Heart left ventricle (tissue), 16 donors: ENCODE measurements at regions of chr12 and their contacts with region 1.

Region 1: DNA sequence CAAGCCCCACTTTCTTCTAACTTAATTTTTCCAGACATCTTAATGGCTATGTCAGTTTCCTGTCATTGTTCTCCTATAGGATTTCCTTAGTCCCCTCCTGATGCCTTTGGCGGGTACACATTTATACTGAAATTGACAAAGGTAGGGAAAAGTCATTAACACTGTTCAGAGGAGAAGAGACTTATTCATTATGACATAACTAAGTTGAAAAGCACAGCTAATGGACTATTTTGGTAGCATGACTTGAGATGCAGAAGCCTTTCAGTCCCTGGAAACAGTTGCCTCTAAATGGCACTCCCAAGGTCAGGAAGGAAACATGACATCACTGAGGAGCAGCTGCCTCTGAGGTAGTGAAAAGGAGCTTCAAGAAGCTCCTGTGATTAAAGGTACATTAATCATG is 317.5 kb upstream of the KITLG start:
- DNase-seq: peak in 3 of 5 donors; percentile 37 to 39 (median 38)
- ATAC-seq: peak; percentile 64 to 97 (median 78)
- H3K4me3 ChIP-seq: no peak overlapping the region
- H3K27ac ChIP-seq: peak overlapping the region in 10 of 12 donors; percentile 15 to 77 (median 62)
- H3K4me1 ChIP-seq: peaks cover 0 to 17% (median 3%) of the 10 kb centered on the region in 12 donors
- H3K27me3 ChIP-seq: no peaks in the 10 kb centered on the region
- CTCF ChIP-seq: no peak
- POLR2A ChIP-seq: no peak

Region 2: DNA sequence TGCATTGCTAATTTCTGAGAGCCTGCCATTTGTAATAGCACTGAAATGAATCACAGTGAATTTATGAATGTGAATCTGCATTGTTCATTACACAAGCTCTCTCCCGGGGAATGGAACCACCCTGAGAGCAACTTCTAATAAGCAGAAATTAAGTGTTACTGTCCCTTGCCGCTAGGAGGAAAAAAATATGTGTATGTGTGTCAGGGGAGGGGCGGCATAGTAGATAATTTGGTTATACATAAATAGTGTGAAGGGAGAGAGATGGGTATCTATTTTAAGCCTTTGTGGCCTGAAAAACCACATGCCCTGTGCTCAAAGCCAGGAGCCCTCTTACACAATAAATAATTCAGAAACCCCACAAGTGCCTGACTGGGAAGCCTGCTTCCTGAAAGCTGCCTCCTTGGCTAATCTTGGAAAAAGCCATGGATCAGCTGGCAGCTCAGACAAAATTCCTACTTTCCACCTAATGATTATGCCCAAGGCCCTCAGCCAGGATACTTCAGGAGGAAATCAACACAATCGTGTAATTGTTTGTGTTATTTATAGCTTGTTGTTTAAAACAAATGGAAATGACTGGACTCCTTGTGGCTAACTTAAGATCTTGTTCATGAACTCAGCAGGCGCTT is 48.8 kb after region 1 on chr12:
- intact Hi-C with region 1: loop called in 2 of 10 experiments (anchors 5 to 10 kb)
- DNase-seq: peak in 4 of 5 donors; percentile 23 to 44 (median 34)
- ATAC-seq: peak; percentile 20 to 84 (median 54)
- H3K4me3 ChIP-seq: no peak overlapping the region
- H3K27ac ChIP-seq: peak overlapping the region in 10 of 12 donors; percentile 12 to 70 (median 48)
- H3K4me1 ChIP-seq: peaks cover 0 to 31% (median 6%) of the 10 kb centered on the region in 12 donors
- H3K27me3 ChIP-seq: no peaks in the 10 kb centered on the region
- CTCF ChIP-seq: peak in 3 of 12 donors; percentile 11 to 27 (median 19)
- POLR2A ChIP-seq: no peak

Region 3: DNA sequence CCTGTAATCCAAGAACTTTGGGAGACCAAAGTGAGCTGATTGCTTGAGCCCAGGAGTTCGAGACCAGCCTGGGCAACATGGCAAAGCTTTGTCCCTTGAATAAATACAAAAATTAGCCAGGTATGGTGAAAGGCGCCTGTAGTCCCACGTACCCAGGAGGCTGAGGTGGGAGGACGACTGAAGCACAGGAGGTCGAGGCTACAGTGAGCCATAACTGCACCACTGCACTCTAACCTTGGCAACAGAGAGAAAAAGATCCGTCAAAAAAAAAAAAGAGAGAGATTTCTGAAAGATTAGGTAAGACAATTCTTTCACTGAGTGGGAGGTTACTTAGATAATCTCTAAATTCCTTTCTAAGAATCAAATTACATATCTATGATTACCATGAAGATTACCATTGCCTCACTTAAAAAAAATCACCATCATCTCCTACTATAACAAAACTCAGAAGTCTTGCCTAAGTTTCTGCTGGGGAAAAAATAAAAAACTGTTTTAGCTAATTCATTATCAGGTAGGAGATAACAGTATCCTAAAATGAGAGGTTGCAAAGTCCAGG is 87.8 kb after region 1 on chr12:
- intact Hi-C with region 1: loop called in 1 of 10 experiments (anchors 10 kb)
- DNase-seq: no peak
- ATAC-seq: no peak
- H3K4me3 ChIP-seq: no peak overlapping the region
- H3K27ac ChIP-seq: peak overlapping the region in 1 of 12 donors; percentile 36
- H3K4me1 ChIP-seq: peaks cover 0 to 18% (median 2%) of the 10 kb centered on the region in 12 donors
- H3K27me3 ChIP-seq: no peaks in the 10 kb centered on the region
- CTCF ChIP-seq: no peak
- POLR2A ChIP-seq: no peak

Region 4: DNA sequence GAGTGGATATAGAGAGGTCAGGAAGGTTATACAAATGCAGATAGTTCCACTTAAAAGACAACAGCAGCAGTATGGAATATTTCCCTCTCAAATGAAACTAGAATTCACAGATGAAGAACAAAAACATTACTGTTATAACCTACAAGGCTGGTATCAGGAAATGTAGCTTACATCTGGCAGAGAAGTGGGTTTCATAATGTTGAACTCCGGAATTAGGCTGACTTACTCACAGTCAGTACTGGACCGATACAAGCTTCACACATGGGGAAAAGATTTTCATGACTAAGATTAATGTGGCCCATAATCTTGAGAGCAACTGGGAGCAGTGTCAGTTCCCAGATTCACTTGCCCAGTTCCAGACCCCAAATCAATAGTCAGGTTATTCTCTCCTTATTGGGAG is 100.7 kb after region 1 on chr12:
- intact Hi-C with region 1: no loop called
- DNase-seq: no peak
- ATAC-seq: no peak
- H3K4me3 ChIP-seq: no peak overlapping the region
- H3K27ac ChIP-seq: no peak overlapping the region
- H3K4me1 ChIP-seq: peaks cover 0 to 2% (median 0%) of the 10 kb centered on the region in 12 donors
- H3K27me3 ChIP-seq: no peaks in the 10 kb centered on the region
- CTCF ChIP-seq: no peak
- POLR2A ChIP-seq: no peak

Region 5: DNA sequence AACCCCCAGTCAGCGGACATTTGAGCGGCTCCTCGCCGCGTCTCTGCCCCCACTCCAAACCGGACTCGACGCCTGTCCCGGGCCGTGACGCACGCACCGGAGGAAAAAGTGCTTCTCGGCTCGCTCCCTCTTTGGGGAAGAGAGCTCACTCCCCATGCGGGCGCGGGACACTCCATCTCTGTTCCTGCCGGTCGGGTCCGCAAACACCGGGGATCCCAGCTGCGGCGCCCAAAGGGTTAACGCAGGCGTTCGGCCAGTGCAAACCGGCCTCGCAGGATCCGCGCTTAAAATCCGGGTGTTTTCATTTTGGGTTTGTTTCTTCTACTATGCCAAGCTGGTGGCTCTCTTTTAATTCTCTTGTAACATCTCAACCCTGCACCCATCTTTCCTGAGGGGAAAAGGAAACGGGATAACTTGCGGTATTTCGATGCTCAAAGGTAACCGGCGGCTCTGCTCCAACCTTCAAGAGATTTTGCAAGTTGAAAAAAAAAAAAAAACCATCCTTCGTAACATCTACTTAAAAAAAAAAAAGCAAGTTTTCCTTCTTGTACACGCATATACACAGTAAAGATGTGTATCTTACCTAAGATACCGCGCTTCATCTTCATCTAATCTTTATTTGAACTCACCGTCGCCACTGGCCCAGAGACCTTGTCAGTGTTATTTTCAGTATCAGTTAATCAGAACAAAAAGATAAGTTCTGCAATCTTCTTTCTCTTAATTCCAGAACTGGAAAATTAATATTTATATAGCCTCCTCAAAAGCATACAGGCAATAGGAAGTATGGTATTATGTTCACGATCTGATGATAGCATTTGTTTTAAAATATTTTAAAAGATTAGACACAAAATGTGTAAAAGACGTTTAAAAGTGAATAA is 812.5 kb after region 1 on chr12:
- intact Hi-C with region 1: no loop called
- DNase-seq: peak in 4 of 5 donors; percentile 64 to 85 (median 72)
- ATAC-seq: peak in 3 of 4 donors; percentile 9 to 28 (median 20)
- H3K4me3 ChIP-seq: peak overlapping the region; percentile 32 to 95 (median 92)
- H3K27ac ChIP-seq: peak overlapping the region; percentile 96 to 99 (median 98)
- H3K4me1 ChIP-seq: peaks cover 0 to 28% (median 9%) of the 10 kb centered on the region in 12 donors
- H3K27me3 ChIP-seq: no peaks in the 10 kb centered on the region
- CTCF ChIP-seq: no peak
- POLR2A ChIP-seq: no peak